ENCODE measurements at regions of chr4 and their contacts with region 1.

Region 1: GRCh38 chr4:108060164-108060563 is 70.5 kb downstream of the HADH start:
- DNase-seq: peak; percentile 22
- H3K4me3 ChIP-seq: no peak overlapping the region
- H3K27ac ChIP-seq: no peak overlapping the region
- H3K4me1 ChIP-seq: peaks cover 9% of the 10 kb centered on the region
- H3K27me3 ChIP-seq: no peaks in the 10 kb centered on the region
- CTCF ChIP-seq: peak; percentile 23 to 41

Region 2: DNA sequence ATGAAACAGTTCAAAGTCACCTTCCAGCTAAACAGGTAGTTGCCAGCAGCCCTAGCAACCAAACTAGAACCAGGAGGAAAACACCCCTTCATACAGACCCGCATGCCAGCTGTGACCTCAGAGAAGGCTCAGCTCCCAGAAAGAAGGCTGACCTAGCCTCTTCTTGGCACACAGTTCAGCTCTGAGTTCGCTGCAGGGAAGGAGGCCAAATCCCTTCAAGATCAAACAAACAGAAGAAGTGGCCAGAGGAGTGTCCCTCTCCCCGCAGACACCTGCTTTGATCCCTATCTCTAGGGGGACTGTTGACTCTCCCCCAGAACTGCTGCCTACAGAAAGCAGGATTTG is 14.5 kb before region 1 on chr4:
- CTCF ChIA-PET with region 1: no interaction called
- dilution Hi-C with region 1: no loop called
- in situ Hi-C with region 1: no loop called
- intact Hi-C with region 1: no loop called
- DNase-seq: peak; percentile 9
- H3K4me3 ChIP-seq: no peak overlapping the region
- H3K27ac ChIP-seq: no peak overlapping the region
- H3K4me1 ChIP-seq: peaks cover 6% of the 10 kb centered on the region
- H3K27me3 ChIP-seq: no peaks in the 10 kb centered on the region
- CTCF ChIP-seq: no peak

Region 3: GRCh38 chr4:108512615-108513505 is 452.7 kb after region 1 on chr4:
- CTCF ChIA-PET with region 1: no interaction called
- dilution Hi-C with region 1: no loop called
- in situ Hi-C with region 1: no loop called
- intact Hi-C with region 1: loop called (anchors 1 kb)
- DNase-seq: peak; percentile 20
- H3K4me3 ChIP-seq: no peak overlapping the region
- H3K27ac ChIP-seq: no peak overlapping the region
- H3K4me1 ChIP-seq: no peaks in the 10 kb centered on the region
- H3K27me3 ChIP-seq: peaks cover 9% of the 10 kb centered on the region
- CTCF ChIP-seq: peak; percentile 21 to 47

Region 4: GRCh38 chr4:108601532-108601931 is 541.4 kb after region 1 on chr4:
- CTCF ChIA-PET with region 1: no interaction called
- dilution Hi-C with region 1: no loop called
- in situ Hi-C with region 1: no loop called
- intact Hi-C with region 1: no loop called
- DNase-seq: peak; percentile 37
- H3K4me3 ChIP-seq: no peak overlapping the region
- H3K27ac ChIP-seq: no peak overlapping the region
- H3K4me1 ChIP-seq: peaks cover 8% of the 10 kb centered on the region
- H3K27me3 ChIP-seq: no peaks in the 10 kb centered on the region
- CTCF ChIP-seq: no peak